GM10248 (cell line): ENCODE measurements at regions of chr17 and their contacts with region 1.

Region 1: GRCh38 chr17:75808905-75809715 is 24.5 kb downstream of the UNK start:
- DNase-seq: peak; percentile 80
- CTCF ChIP-seq: no peak

Region 2: GRCh38 chr17:75822119-75822799 is 13.1 kb after region 1 on chr17:
- CTCF ChIA-PET with region 1: interaction called, 56 read pairs
- POLR2A ChIA-PET with region 1: interaction called, 3 read pairs
- DNase-seq: no peak
- CTCF ChIP-seq: no peak